Activated naive CD4-positive, alpha-beta T cell treated with anti-CD3 and anti-CD28 coated beads, Interleukin-2, amount 10 ng/mL, durations not matched to agents 7 days and 5 days (primary cell): ENCODE measurements at regions of chr2 and their contacts with region 1.

Region 1: DNA sequence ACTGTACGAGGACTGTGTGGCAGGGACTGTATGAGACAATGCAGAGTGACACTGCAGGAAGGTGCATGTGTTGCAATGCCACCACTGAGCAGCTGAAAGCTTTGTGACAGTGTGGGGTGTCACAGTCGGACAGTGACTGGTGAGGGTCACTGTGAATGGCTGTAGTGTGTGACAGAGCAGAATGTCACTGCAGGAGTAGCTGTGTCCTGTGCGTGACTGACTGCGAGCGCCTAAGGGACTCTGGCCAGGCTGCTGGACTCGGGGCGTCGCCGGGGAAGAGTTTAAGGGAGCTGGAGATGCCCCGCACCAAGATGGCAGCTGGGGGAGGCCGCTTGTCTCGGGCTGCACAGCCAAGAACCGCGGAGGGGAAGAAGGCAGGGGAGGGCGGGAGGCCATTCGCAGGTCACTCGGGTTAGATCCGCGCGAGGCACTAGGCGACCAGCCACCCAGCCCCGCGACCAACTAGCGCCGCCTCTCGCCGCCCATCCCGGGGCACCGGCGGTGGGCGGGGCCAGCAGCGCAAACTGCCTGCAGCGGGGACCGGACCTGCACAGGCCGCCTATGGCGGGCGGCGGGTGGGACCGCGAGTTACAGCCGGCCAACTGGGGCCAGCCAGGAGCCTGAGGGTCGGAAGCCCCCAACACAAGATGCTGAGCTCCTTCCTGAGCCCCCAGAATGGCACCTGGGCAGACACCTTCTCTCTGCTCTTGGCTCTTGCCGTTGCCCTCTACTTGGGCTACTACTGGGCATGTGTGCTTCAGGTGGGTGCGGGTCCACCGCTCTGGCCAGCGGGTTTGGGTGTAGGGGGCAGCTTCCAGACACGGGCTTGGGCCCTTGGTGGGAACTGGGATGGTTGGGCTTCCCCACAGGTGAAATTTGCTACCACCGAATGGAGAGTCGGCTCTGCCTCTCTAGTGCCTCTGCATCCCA is at the start of gene ABHD1:
- DNase-seq: peak; percentile 76
- H3K4me3 Mint-ChIP-seq: peak within 1 kb of the TSS; percentile 73
- H3K27ac Mint-ChIP-seq: peak within 1 kb of the TSS; percentile 17
- H3K4me1 Mint-ChIP-seq: peaks cover 20% of the 10 kb centered on the region
- H3K27me3 Mint-ChIP-seq: peaks cover 48% of the 10 kb centered on the region

Region 2: DNA sequence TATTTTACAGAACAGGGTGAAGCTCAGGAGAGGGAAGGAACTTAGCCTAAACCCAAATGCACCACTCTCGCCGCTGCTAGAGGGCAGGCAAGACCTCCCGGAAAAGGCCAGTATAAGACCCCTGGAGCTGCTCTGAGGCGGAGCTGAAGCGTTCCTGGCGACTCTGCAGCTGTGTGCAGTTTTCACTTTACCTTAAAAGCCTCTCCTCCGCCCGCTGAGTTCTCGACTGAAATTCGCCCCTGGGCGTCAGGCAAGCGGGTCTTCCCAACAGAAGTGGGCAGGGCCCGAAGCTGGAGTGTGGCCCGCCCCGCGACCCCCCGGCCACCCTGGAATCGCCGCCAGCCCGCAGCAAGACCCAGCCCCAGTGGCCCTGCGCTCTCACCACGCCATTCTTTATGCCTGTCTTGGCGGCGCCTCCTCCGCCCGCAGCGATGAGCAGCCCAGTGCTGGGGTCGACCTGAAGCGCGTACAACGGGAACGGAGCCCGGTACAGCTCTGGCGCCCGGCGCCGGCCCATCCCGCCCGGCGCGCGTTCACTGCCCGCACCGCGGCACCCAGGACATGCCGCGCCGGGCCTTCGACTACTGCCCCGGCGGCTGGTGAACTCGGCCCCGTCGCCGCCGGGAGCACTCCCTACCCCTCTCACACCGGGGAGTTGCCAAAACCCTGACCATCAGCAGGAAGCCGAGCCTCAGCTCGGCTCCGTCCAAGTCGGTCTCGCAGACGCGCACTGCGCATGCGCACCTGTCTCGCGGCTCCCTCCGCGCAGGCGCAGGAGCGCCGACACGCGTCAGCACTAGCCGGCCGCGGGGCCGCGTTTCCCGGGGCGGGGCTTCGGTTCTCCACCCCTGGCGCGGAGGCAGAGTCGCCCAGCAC is 10.6 kb after region 1 on chr2 and contains the start of gene PREB:
- CTCF ChIA-PET with region 1: interaction called, 19 read pairs
- DNase-seq: peak; percentile 98
- H3K4me3 Mint-ChIP-seq: peak within 1 kb of the TSS; percentile 94
- H3K27ac Mint-ChIP-seq: peak within 1 kb of the TSS; percentile 97
- H3K4me1 Mint-ChIP-seq: peaks cover 32% of the 10 kb centered on the region
- H3K27me3 Mint-ChIP-seq: peaks cover 22% of the 10 kb centered on the region